ENCODE measurements at regions of chr5 and their contacts with region 1.

Region 1: GRCh38 chr5:97009212-97009898 is 73.5 kb downstream of the LNPEP start:
- DNase-seq: peak; percentile 29
- CTCF ChIP-seq: no peak

Region 2: GRCh38 chr5:96668725-96669124 is 340.6 kb before region 1 on chr5:
- CTCF ChIA-PET with region 1: no interaction called
- POLR2A ChIA-PET with region 1: no interaction called
- DNase-seq: no peak
- CTCF ChIP-seq: no peak

Region 3: GRCh38 chr5:96978812-96979449 is 30.4 kb before region 1 on chr5:
- CTCF ChIA-PET with region 1: no interaction called
- POLR2A ChIA-PET with region 1: no interaction called
- DNase-seq: no peak
- CTCF ChIP-seq: no peak

Region 4: GRCh38 chr5:96997265-96997859 is 12.0 kb before region 1 on chr5:
- CTCF ChIA-PET with region 1: interaction called, 11 read pairs
- POLR2A ChIA-PET with region 1: no interaction called
- DNase-seq: peak; percentile 13
- CTCF ChIP-seq: peak; percentile 26

Region 5: DNA sequence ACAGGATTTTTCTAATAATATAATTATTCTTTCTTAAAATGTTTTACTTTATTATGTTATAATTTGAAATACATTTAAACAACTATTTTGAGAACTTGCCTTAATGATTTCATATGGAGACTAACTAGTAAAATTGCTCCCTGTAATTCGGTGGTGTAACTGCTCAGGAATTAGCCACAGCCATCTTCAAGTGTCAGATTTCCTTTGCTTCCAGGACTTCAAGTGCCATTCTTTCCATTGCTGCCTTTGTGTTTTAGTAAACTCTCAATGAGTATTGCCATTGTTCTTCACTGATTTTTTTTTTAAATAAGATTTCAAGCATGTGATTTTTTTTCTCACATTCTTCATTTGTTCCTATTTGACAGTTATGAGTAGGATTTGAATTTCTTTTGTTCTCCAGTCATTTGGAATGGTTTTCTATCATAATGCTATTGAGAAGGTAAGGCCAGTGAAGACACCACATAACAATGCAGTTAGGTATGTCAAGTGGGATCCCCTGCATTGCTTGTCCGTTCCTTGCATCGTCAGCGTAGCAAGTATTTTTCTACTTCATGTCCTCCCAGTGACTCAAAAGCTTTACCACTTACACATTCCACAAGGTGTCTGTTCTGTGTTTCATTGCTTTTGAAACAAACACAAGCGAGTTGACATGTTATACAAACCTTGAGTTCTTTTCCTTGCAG is 10.2 kb after region 1 on chr5:
- CTCF ChIA-PET with region 1: interaction called, 11 read pairs
- POLR2A ChIA-PET with region 1: no interaction called
- DNase-seq: no peak
- CTCF ChIP-seq: no peak

Measured in GM10248 (cell line).